ENCODE measurements at regions of chr21 and their contacts with region 1.

Region 1: DNA sequence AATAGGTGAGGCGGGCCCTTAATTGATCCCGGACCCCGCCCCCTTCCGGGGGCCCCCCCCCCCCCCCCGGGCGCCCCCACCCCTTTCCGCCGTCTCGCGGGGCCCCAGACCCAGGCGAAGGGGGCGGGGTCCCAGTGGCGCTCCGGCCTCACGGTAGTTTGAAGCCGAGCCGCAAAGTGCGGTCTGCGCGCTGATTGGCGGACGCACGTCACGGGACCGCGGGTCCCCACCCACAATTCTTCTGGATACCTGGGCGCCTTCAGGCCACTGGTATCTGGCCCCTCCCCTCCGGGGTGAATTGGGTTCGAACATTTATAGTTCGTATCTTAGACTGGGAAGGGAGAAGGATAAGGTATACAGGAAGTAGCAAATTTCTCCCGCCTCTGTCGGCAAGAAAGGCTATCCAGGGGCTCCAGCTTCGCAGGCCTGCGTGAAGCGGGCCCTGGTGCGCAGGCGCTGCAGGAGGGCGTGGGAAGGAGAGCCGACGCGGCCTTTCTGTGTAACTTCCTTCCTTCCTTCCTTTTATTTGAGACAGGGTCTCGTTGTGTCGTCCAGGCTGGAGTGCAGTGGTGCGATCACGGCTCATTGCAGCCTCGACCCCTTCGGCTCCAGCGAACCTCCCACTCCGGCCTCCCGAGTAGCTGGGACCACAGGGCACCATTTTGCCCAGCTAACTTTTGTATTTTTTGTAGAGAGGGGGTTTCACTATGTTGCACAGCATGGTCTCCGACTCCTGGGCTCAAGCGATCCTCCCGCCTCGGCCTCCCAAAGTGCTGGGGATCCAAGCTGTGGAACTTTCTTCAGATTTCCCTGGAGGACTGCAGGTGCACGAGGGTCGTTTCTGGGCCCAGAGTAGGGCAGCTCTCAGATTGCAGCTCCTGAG is 564 bp upstream of the HMGN1 start:
- DNase-seq: peak; percentile 97
- H3K4me3 Mint-ChIP-seq: peak overlapping the region; percentile 99
- H3K27ac Mint-ChIP-seq: peak overlapping the region; percentile 100
- H3K4me1 Mint-ChIP-seq: peaks cover 32% of the 10 kb centered on the region
- H3K27me3 Mint-ChIP-seq: peaks cover 4% of the 10 kb centered on the region

Region 2: DNA sequence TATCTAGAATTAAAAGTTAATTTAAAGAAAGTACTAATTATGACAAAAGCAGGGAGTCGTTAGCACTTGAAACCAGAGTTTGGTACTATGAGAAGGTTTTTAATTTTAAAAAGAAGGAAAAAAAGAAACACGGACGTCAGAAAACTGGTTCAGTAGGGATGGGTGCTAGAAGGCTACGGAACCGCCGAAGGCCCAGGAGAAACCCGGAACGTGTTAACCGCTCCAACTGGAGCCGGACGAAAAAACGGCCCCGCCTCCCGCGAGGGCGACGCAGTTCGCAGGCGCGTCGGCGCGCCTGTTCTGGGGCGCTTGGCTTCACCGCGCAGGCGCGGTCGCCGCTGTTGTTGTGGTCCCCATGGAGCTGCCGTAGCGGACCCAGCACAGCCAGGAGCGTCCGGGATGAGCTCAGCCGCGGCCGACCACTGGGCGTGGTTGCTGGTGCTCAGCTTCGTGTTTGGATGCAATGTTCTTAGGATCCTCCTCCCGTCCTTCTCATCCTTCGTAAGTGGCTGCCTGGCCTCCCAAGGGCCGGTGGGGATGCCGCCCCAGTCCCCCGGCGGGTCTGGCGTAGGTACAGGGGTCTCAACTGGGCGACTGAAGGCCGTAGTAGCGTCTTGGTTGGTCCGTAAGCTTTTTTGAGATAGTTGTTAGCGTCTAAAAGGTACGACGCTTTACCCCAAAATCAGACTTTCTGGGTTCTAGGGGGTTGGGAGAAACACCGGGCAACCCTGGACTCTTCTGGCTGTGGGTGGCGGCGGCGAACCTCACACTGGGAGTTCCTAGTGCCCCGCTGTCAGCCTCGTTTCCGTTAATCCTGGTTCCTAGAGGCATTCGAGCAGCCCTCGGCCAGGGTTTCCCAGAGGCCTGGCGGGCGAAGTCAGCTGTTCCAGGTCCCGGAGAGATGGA is 30.8 kb after region 1 on chr21:
- intact Hi-C with region 1: loop called (anchors 1 kb)
- DNase-seq: peak; percentile 92
- H3K4me3 Mint-ChIP-seq: peak overlapping the region; percentile 95
- H3K27ac Mint-ChIP-seq: peak overlapping the region; percentile 82
- H3K4me1 Mint-ChIP-seq: peaks cover 20% of the 10 kb centered on the region
- H3K27me3 Mint-ChIP-seq: peaks cover 2% of the 10 kb centered on the region

Region 3: GRCh38 chr21:39445321-39446269 is 96.1 kb after region 1 on chr21 and contains the start of gene LCA5L:
- intact Hi-C with region 1: loop called (anchors 2 kb)
- DNase-seq: peak; percentile 88
- H3K4me3 Mint-ChIP-seq: peak within 1 kb of the TSS; percentile 89
- H3K27ac Mint-ChIP-seq: peak within 1 kb of the TSS; percentile 88
- H3K4me1 Mint-ChIP-seq: peaks cover 12% of the 10 kb centered on the region
- H3K27me3 Mint-ChIP-seq: peaks cover 40% of the 10 kb centered on the region
- total RNA-seq, gene LCA5L: 0.32 TPM in 1 of 2 replicates, not detected in the other

Measured in activated T-helper 2 cell treated with anti-CD3 and anti-CD28 coated beads, Interferon-gamma antibody, Interleukin-2, Interleukin-4, amounts not matched to agents 10 μg/mL and 5 μg/mL and 100 μg/mL, durations not matched to agents 14 hours and 24 hours and 36 hours (primary cell).